CD4-positive, alpha-beta memory T cell (primary cell): ENCODE measurements at regions of chr13 and their contacts with region 1.

Region 1: GRCh38 chr13:42478531-42479156 is 95.3 kb upstream of the TNFSF11 start:
- DNase-seq: peak in 2 of 5 donors; percentile 5 to 11
- H3K4me3 ChIP-seq: no peak overlapping the region
- H3K4me3 Mint-ChIP-seq: no peak overlapping the region
- H3K27ac ChIP-seq: no peak overlapping the region
- H3K27ac Mint-ChIP-seq: peak overlapping the region in 1 of 7 donors; percentile 20
- H3K4me1 ChIP-seq: no peaks in the 10 kb centered on the region
- H3K4me1 Mint-ChIP-seq: peaks cover 0 to 6% (median 3%) of the 10 kb centered on the region in 4 donors
- H3K27me3 ChIP-seq: no peaks in the 10 kb centered on the region
- H3K27me3 Mint-ChIP-seq: no peaks in the 10 kb centered on the region

Region 2: DNA sequence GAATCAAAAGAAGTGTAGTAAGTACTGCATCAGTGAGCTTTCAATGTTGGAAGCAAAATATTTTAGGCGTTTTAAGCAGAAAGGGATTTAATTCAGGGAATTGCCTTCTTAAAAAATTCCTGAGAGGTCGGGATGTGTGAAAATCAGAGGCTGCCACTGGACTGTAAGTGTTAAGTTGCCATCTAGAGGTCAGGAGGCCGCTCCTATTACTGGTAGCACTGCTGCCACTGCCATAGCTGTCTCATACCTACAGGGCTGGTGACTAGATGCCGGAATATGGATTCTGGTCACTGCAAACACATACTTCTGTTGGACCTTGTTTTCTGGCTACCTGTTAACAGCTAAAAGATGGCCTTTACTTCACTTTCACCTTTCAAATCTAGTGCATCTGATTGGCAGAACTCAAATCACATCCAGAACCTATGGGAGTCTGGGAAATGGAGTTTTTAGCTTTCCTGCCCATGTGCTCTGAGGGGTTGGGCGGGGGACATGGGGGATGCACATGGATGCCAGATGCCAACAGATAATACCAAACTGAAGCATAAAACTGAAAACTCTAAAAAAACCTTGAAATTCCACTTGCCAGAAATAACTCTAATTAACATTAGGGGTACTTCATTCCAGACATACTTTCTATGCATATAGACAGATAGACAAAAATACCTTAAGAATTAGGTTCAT is 400.4 kb before region 1 on chr13:
- CTCF ChIA-PET with region 1: no interaction called
- POLR2A ChIA-PET with region 1: no interaction called
- intact Hi-C with region 1: no loop called
- DNase-seq: no peak
- H3K4me3 ChIP-seq: no peak overlapping the region
- H3K4me3 Mint-ChIP-seq: no peak overlapping the region
- H3K27ac ChIP-seq: no peak overlapping the region
- H3K27ac Mint-ChIP-seq: no peak overlapping the region
- H3K4me1 ChIP-seq: no peaks in the 10 kb centered on the region
- H3K4me1 Mint-ChIP-seq: peaks cover 14 to 30% (median 19%) of the 10 kb centered on the region in 4 donors
- H3K27me3 ChIP-seq: no peaks in the 10 kb centered on the region
- H3K27me3 Mint-ChIP-seq: no peaks in the 10 kb centered on the region

Region 3: DNA sequence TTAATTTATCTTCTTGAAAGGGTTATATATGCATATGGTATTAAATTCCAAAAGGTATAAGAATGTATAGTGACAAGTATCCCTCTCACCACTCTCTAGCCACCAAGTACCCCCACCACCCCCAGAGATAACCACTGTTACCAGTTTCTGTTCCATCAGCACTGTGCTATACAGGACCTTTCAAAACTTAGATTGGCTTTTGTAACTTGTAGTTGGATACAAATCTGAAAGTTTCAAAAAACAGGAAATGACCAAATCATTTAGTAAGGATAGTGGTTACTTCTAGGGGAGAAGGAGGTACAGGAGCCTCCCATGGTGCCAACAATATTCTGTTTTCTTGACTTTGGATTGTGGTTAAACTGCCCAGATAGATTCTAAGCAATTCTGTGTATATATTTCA is 150.0 kb before region 1 on chr13:
- CTCF ChIA-PET with region 1: interaction called, 53 read pairs
- POLR2A ChIA-PET with region 1: interaction called, 5 read pairs
- intact Hi-C with region 1: no loop called
- DNase-seq: peak in 2 of 5 donors; percentile 2 to 4
- H3K4me3 ChIP-seq: no peak overlapping the region
- H3K4me3 Mint-ChIP-seq: peak overlapping the region in 4 of 8 donors; percentile 21 to 64 (median 44)
- H3K27ac ChIP-seq: no peak overlapping the region
- H3K27ac Mint-ChIP-seq: peak overlapping the region in 6 of 7 donors; percentile 9 to 92 (median 37)
- H3K4me1 ChIP-seq: peaks cover 16% of the 10 kb centered on the region
- H3K4me1 Mint-ChIP-seq: peaks cover 13 to 37% (median 16%) of the 10 kb centered on the region in 4 donors
- H3K27me3 ChIP-seq: no peaks in the 10 kb centered on the region
- H3K27me3 Mint-ChIP-seq: no peaks in the 10 kb centered on the region